ENCODE measurements at regions of chr16 and their contacts with region 1.

Region 1: GRCh38 chr16:62041401-62041800 is 5.2 kb upstream of the CDH8 start:
- DNase-seq: peak in 6 of 10 donors; percentile 39 to 87 (median 55)

Region 2: DNA sequence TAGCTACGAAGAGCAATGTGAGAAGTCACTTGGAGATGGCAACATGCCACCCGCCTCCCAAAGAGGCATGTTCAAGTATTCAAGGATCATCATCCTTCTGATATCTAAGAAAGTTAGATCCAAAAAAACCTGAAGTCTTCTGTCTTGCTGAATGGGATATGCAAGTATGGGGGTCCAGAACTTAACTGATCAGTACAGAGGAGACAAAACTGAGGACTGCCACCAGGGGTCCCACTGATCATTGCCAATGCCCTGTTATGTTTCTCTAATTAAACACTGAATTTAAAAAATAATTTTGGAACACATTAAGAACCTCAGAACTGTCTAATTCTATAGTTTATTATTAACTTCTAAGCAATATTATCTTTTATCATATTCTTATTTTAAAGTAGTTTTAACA is 104.9 kb before region 1 on chr16:
- intact Hi-C with region 1: loop called (anchors 5 kb)
- DNase-seq: peak in 5 of 10 donors; percentile 8 to 82 (median 29)

Region 3: DNA sequence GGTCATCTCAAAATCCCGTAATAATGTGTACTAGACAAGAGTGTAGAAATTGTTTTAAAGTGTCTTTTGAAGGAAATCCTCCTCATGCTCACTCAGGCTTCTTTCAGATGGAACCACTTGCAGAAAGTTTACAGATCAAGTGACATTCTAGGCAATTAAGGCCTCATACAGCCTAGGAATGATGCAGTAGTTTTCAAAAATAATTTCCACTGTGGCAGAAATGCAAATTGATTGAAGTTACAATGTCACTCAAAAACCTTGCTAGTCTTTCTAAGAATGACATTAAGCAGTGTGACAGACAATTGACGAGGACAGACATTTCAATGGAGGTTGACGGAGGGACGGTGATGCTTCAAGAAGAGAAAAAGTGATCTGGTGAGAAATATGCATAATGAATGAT is 48.3 kb after region 1 on chr16:
- intact Hi-C with region 1: no loop called
- DNase-seq: no peak

Region 4: GRCh38 chr16:62190426-62190825 is 149.0 kb after region 1 on chr16:
- intact Hi-C with region 1: no loop called
- DNase-seq: no peak

Measured in posterior cingulate gyrus (tissue), 11 donors.